Activated CD4-positive, alpha-beta memory T cell treated with anti-CD3 and anti-CD28 coated beads for 36 hours (primary cell): ENCODE measurements at regions of chr4 and their contacts with region 1.

Region 1: GRCh38 chr4:68271851-68272756 is 26.6 kb upstream of the TMPRSS11B start:
- DNase-seq: no peak
- H3K4me3 Mint-ChIP-seq: peak overlapping the region; percentile 36
- H3K27ac Mint-ChIP-seq: no peak overlapping the region
- H3K4me1 Mint-ChIP-seq: peaks cover 7% of the 10 kb centered on the region
- H3K27me3 Mint-ChIP-seq: peaks cover 1% of the 10 kb centered on the region

Region 2: GRCh38 chr4:67380154-67380553 is 892.0 kb before region 1 on chr4:
- CTCF ChIA-PET with region 1: no interaction called
- POLR2A ChIA-PET with region 1: no interaction called
- intact Hi-C with region 1: no loop called
- DNase-seq: no peak
- H3K4me3 Mint-ChIP-seq: no peak overlapping the region
- H3K27ac Mint-ChIP-seq: no peak overlapping the region
- H3K4me1 Mint-ChIP-seq: no peaks in the 10 kb centered on the region
- H3K27me3 Mint-ChIP-seq: no peaks in the 10 kb centered on the region

Region 3: DNA sequence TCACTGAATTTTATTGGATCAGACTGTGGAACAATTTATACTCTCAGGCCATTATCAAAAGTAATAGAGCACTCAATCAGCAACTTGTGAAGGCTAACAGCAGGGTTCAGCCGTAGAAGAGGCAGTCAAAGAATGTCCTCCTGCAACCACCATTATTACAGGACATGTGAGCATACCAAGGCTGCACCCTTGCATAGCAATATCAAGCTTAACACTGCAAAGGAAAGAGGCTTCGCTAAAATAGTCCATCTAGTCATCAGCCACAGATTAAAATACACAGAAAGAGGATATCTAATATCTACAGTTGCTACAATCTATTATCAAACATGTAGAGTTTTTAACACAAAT is 16.3 kb after region 1 on chr4:
- CTCF ChIA-PET with region 1: interaction called, 12 read pairs
- POLR2A ChIA-PET with region 1: no interaction called
- intact Hi-C with region 1: no loop called
- DNase-seq: no peak
- H3K4me3 Mint-ChIP-seq: no peak overlapping the region
- H3K27ac Mint-ChIP-seq: no peak overlapping the region
- H3K4me1 Mint-ChIP-seq: no peaks in the 10 kb centered on the region
- H3K27me3 Mint-ChIP-seq: peaks cover 4% of the 10 kb centered on the region

Region 4: GRCh38 chr4:68401269-68401668 is 129.2 kb after region 1 on chr4:
- CTCF ChIA-PET with region 1: no interaction called
- POLR2A ChIA-PET with region 1: no interaction called
- intact Hi-C with region 1: no loop called
- DNase-seq: no peak
- H3K4me3 Mint-ChIP-seq: no peak overlapping the region
- H3K27ac Mint-ChIP-seq: no peak overlapping the region
- H3K4me1 Mint-ChIP-seq: no peaks in the 10 kb centered on the region
- H3K27me3 Mint-ChIP-seq: no peaks in the 10 kb centered on the region

Region 5: GRCh38 chr4:68498413-68499007 is 226.4 kb after region 1 on chr4:
- CTCF ChIA-PET with region 1: interaction called, 6 read pairs
- POLR2A ChIA-PET with region 1: no interaction called
- intact Hi-C with region 1: loop called (anchors 2 kb)
- DNase-seq: peak; percentile 75
- H3K4me3 Mint-ChIP-seq: no peak overlapping the region
- H3K27ac Mint-ChIP-seq: no peak overlapping the region
- H3K4me1 Mint-ChIP-seq: peaks cover 7% of the 10 kb centered on the region
- H3K27me3 Mint-ChIP-seq: no peaks in the 10 kb centered on the region